ENCODE measurements at regions of chr13 and their contacts with region 1.

Region 1: GRCh38 chr13:113393563-113394338 is 29.8 kb upstream of the GRTP1 start:
- DNase-seq: peak; percentile 83 to 90
- ATAC-seq: peak; percentile 95 to 99 (median 98)
- H3K4me3 ChIP-seq: peak overlapping the region; percentile 70
- H3K4me3 Mint-ChIP-seq: peak overlapping the region; percentile 83
- H3K27ac ChIP-seq: no peak overlapping the region
- H3K27ac Mint-ChIP-seq: peak overlapping the region in 1 of 2 donors; percentile 49
- H3K4me1 ChIP-seq: peaks cover 13% of the 10 kb centered on the region
- H3K4me1 Mint-ChIP-seq: peaks cover 5% of the 10 kb centered on the region in 2 donors
- H3K27me3 ChIP-seq: no peaks in the 10 kb centered on the region
- H3K27me3 Mint-ChIP-seq: no peaks in the 10 kb centered on the region
- CTCF ChIP-seq: peak; percentile 78

Region 2: GRCh38 chr13:113296842-113297369 is 96.8 kb before region 1 on chr13 and contains the start of gene LAMP1:
- intact Hi-C with region 1: loop called (anchors 2 kb)
- DNase-seq: peak; percentile 98 to 100
- ATAC-seq: peak; percentile 76 to 90 (median 82)
- H3K4me3 ChIP-seq: peak within 1 kb of the TSS; percentile 89
- H3K4me3 Mint-ChIP-seq: peak within 1 kb of the TSS; percentile 100
- H3K27ac ChIP-seq: peak within 1 kb of the TSS; percentile 92
- H3K27ac Mint-ChIP-seq: peak within 1 kb of the TSS; percentile 89 to 99
- H3K4me1 ChIP-seq: peaks cover 29% of the 10 kb centered on the region
- H3K4me1 Mint-ChIP-seq: peaks cover 32 to 33% of the 10 kb centered on the region in 2 donors
- H3K27me3 ChIP-seq: peaks cover 2% of the 10 kb centered on the region
- H3K27me3 Mint-ChIP-seq: peaks cover 17 to 22% of the 10 kb centered on the region in 2 donors
- CTCF ChIP-seq: no peak
- total RNA-seq, gene LAMP1: 137 to 168 (median 159) TPM